ENCODE measurements at regions of chr13 and their contacts with region 1.

Region 1: GRCh38 chr13:31742097-31742734 is 2.9 kb downstream of the RXFP2 start:
- DNase-seq: peak; percentile 52
- H3K4me3 Mint-ChIP-seq: no peak overlapping the region
- H3K27ac Mint-ChIP-seq: no peak overlapping the region
- H3K4me1 Mint-ChIP-seq: peaks cover 2% of the 10 kb centered on the region
- H3K27me3 Mint-ChIP-seq: peaks cover 10% of the 10 kb centered on the region

Region 2: GRCh38 chr13:31236211-31236786 is 505.9 kb before region 1 on chr13:
- intact Hi-C with region 1: loop called (anchors 5 kb)
- DNase-seq: no peak
- H3K4me3 Mint-ChIP-seq: no peak overlapping the region
- H3K27ac Mint-ChIP-seq: no peak overlapping the region
- H3K4me1 Mint-ChIP-seq: no peaks in the 10 kb centered on the region
- H3K27me3 Mint-ChIP-seq: no peaks in the 10 kb centered on the region

Region 3: DNA sequence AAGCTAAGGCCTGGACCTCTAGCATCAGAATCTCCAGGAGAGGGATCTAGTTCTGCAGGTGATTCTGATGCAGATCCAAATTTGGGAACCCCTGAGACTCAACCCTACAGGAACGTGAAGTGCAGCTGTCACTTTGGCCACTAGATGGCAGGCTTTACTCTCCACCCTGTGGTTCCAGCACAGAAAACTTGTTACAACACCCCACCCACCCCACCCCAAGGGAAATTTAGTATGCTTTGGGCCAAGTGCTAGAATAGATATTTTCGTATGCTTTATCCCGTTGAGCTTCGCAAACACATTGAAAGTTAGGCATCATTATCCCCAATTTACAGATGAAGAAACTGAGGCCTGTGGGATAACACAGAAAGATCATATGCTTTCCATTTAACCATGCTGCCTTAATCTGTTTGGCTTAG is 310.5 kb before region 1 on chr13:
- intact Hi-C with region 1: loop called (anchors 1 kb)
- DNase-seq: peak; percentile 15
- H3K4me3 Mint-ChIP-seq: no peak overlapping the region
- H3K27ac Mint-ChIP-seq: no peak overlapping the region
- H3K4me1 Mint-ChIP-seq: no peaks in the 10 kb centered on the region
- H3K27me3 Mint-ChIP-seq: peaks cover 1% of the 10 kb centered on the region

Region 4: DNA sequence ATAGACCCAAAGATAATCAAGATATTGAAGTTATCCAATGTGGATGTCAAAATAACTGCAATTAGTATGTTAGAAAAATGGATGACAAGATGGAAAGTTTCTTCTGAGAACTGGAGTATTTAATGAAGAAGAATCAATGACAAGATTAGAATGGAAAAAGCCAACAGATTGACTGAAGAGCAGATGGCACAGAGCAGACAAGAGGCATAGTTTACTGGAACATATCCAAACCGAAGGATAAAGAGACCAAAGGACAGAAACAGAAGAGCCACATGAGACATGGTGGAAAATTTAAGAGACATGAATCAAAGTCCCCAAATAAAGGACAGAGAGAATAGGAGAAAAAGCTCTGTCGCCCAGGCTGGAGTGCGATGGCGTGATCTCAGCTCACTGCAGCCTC is 92.5 kb before region 1 on chr13:
- intact Hi-C with region 1: no loop called
- DNase-seq: no peak
- H3K4me3 Mint-ChIP-seq: no peak overlapping the region
- H3K27ac Mint-ChIP-seq: no peak overlapping the region
- H3K4me1 Mint-ChIP-seq: no peaks in the 10 kb centered on the region
- H3K27me3 Mint-ChIP-seq: no peaks in the 10 kb centered on the region

Region 5: DNA sequence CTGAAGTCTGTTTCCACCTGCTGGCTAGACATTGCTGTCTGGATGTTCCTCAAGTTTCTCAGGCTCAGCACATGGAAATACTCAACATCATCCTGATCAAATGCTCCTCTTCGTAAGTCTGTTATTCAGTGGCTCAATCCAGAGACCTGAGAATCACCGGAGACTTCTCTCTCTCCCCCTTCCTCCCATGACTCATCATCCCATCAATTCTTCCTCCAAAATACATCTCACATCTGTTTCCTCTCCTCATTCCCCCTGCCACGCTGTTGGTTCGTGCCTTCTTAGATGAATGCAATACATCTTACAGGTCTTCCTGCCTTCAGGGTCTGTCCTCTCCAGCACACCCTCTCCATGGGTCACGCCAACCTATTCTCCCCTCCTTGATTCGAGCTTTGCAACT is 10.3 kb before region 1 on chr13:
- intact Hi-C with region 1: no loop called
- DNase-seq: no peak
- H3K4me3 Mint-ChIP-seq: no peak overlapping the region
- H3K27ac Mint-ChIP-seq: no peak overlapping the region
- H3K4me1 Mint-ChIP-seq: no peaks in the 10 kb centered on the region
- H3K27me3 Mint-ChIP-seq: peaks cover 9% of the 10 kb centered on the region

Region 6: GRCh38 chr13:31818236-31818635 is 76.0 kb after region 1 on chr13:
- intact Hi-C with region 1: no loop called
- DNase-seq: no peak
- H3K4me3 Mint-ChIP-seq: no peak overlapping the region
- H3K27ac Mint-ChIP-seq: no peak overlapping the region
- H3K4me1 Mint-ChIP-seq: no peaks in the 10 kb centered on the region
- H3K27me3 Mint-ChIP-seq: peaks cover 23% of the 10 kb centered on the region